Pancreas (tissue), 10 donors: ENCODE measurements at regions of chr6 and their contacts with region 1.

Region 1: GRCh38 chr6:36979347-36979742 is 6.7 kb downstream of the MTCH1 start:
- DNase-seq: peak in 4 of 6 donors; percentile 64 to 76 (median 70)
- ATAC-seq: peak; percentile 78 to 93 (median 92)
- H3K4me3 ChIP-seq: no peak overlapping the region
- H3K27ac ChIP-seq: peak overlapping the region in 2 of 4 donors; percentile 60 to 62
- H3K4me1 ChIP-seq: peaks cover 7 to 38% (median 18%) of the 10 kb centered on the region in 3 donors
- H3K27me3 ChIP-seq: no peaks in the 10 kb centered on the region
- CTCF ChIP-seq: peak in 3 of 4 donors; percentile 25 to 34 (median 32)

Region 2: DNA sequence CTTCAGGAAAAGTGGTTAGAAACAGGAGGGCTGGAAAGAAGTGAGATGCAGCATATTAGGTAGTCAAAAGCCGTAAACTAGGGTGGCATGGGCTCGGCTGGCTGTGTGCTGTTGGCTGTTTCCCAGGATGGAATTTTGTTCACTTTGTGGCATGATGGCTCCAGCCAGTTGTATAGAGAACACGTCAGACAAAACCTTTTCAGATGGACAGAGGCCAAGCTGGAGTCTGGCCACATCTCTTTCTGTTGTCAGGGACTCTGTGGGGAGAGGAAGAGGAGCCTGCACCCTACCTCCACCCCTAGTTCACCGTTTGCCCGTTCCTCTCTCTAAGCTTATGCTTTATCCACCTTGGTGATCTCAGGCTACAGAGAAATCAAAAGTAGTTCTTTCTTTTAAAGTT is 71.6 kb before region 1 on chr6:
- intact Hi-C with region 1: loop called in 1 of 3 experiments (anchors 10 kb)
- DNase-seq: peak in 5 of 6 donors; percentile 66 to 91 (median 78)
- ATAC-seq: peak; percentile 61 to 93 (median 76)
- H3K4me3 ChIP-seq: no peak overlapping the region
- H3K27ac ChIP-seq: peak overlapping the region; percentile 1 to 81 (median 70)
- H3K4me1 ChIP-seq: peaks cover 27 to 36% (median 30%) of the 10 kb centered on the region in 3 donors
- H3K27me3 ChIP-seq: no peaks in the 10 kb centered on the region
- CTCF ChIP-seq: no peak